ENCODE measurements at regions of chr3 and their contacts with region 1.

Region 1: GRCh38 chr3:141353652-141354495 is 14.4 kb upstream of the ZBTB38 start:
- DNase-seq: no peak
- ATAC-seq: no peak
- H3K4me3 ChIP-seq: no peak overlapping the region
- H3K27ac ChIP-seq: no peak overlapping the region
- H3K4me1 ChIP-seq: no peaks in the 10 kb centered on the region
- H3K27me3 ChIP-seq: no peaks in the 10 kb centered on the region
- CTCF ChIP-seq: no peak

Region 2: DNA sequence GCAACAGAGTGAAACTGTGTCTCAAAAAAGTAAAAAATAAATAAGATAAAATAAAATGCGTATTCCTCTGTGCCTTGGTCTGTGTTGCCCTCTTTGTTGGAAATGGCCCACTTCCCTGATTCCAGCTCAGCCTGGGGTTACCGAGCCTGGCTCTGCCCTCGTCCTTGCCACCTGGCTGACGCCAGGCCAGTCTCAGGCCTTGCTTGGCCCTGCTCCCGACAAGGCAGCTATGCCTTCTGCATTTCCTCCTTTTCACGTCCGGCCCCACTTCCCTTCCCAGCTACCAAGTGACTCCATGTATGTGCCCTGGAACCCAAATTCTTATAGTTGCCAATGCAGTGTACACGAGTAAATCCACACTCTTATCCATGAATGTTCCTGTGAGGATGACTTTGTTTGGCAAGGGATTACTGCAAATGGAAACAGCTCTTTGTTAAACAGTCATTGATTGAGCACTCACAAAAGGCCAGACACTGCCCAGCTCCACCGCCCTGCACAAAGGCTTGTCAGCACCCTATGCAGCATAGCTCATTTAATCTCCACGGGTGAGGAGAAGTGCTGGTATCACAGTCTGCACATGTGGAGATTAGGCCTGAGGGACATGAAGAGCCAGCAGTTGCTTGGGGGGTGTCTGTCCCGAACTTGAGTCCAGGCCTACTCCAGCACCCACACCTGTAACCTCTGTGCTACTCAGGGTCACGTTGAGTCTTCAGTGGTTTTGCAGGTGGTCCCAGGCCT is 277.7 kb before region 1 on chr3:
- intact Hi-C with region 1: no loop called
- DNase-seq: peak; percentile 67 to 88 (median 82)
- ATAC-seq: peak; percentile 87 to 93 (median 87)
- H3K4me3 ChIP-seq: no peak overlapping the region
- H3K27ac ChIP-seq: peak overlapping the region in 3 of 4 donors; percentile 9 to 57 (median 10)
- H3K4me1 ChIP-seq: peaks cover 4 to 29% (median 19%) of the 10 kb centered on the region in 3 donors
- H3K27me3 ChIP-seq: no peaks in the 10 kb centered on the region
- CTCF ChIP-seq: no peak

Region 3: GRCh38 chr3:141553055-141553454 is 199.2 kb after region 1 on chr3:
- intact Hi-C with region 1: loop called in 1 of 3 experiments (anchors 10 kb)
- DNase-seq: no peak
- ATAC-seq: peak in 2 of 4 donors; percentile 9 to 14
- H3K4me3 ChIP-seq: no peak overlapping the region
- H3K27ac ChIP-seq: no peak overlapping the region
- H3K4me1 ChIP-seq: no peaks in the 10 kb centered on the region
- H3K27me3 ChIP-seq: no peaks in the 10 kb centered on the region
- CTCF ChIP-seq: no peak

Measured in pancreas (tissue), 10 donors.